Mammary epithelial cell (primary cell): ENCODE measurements at regions of chr6 and their contacts with region 1.

Region 1: GRCh38 chr6:32838114-32838958 is at the start of gene TAP2:
- DNase-seq: peak; percentile 88
- H3K4me3 ChIP-seq: peak within 1 kb of the TSS; percentile 75 to 88 (median 86)
- H3K27ac ChIP-seq: peak within 1 kb of the TSS; percentile 60
- H3K4me1 ChIP-seq: peaks cover 9% of the 10 kb centered on the region
- H3K27me3 ChIP-seq: no peaks in the 10 kb centered on the region
- CTCF ChIP-seq: peak; percentile 80 to 97
- total RNA-seq, gene TAP2: 41.8 to 63.4 TPM

Region 2: DNA sequence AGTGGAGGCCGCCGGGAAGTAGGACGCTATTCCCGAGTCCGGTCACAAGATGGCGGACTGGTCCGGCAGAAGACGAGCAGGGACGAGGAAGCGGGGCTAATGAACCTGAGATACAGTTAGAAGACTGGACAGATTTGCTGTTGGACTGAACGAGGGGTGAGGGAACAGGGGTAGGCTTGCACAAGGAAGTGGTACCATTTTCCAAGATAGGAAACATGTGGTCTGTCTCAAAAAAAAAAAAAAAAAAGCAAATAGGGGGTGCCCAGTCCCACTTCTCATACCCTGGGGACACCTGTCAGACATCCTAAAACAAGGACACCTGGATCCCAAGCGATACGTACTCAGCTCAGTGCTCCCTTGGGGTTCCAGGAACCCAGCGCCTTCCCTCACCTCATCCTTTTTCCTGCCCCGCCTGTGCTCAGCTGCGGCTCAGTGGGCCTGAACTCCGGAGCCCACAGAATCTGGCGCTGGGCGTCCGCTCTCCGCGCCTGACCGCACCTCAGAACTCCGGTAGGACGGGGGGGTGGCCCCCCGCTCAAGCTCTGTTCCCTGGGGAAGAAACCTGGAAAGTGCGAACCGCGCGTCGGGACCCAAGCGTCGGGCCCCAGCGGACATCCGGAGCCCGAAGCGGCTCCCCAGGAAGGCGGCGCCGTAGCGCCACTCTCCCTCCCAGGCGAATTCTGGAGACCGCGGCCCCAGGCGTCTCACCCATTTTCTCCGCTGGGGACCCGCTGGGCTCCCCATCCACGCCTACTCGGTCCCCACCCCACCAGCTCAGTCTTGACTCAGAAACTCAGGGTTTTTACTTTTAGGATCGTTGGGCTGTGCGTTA is 1157.3 kb before region 1 on chr6 and contains the start of gene LY6G5C:
- CTCF ChIA-PET with region 1: no interaction called
- dilution Hi-C with region 1: no loop called
- in situ Hi-C with region 1: no loop called
- intact Hi-C with region 1: no loop called
- DNase-seq: peak; percentile 69
- H3K4me3 ChIP-seq: peak within 1 kb of the TSS; percentile 42 to 53 (median 51)
- H3K27ac ChIP-seq: peak within 1 kb of the TSS; percentile 11
- H3K4me1 ChIP-seq: peaks cover 11% of the 10 kb centered on the region
- H3K27me3 ChIP-seq: no peaks in the 10 kb centered on the region
- CTCF ChIP-seq: peak; percentile 63 to 71
- total RNA-seq, gene LY6G5C: 1.4 TPM in 1 of 2 donors, not detected in the other

Region 3: DNA sequence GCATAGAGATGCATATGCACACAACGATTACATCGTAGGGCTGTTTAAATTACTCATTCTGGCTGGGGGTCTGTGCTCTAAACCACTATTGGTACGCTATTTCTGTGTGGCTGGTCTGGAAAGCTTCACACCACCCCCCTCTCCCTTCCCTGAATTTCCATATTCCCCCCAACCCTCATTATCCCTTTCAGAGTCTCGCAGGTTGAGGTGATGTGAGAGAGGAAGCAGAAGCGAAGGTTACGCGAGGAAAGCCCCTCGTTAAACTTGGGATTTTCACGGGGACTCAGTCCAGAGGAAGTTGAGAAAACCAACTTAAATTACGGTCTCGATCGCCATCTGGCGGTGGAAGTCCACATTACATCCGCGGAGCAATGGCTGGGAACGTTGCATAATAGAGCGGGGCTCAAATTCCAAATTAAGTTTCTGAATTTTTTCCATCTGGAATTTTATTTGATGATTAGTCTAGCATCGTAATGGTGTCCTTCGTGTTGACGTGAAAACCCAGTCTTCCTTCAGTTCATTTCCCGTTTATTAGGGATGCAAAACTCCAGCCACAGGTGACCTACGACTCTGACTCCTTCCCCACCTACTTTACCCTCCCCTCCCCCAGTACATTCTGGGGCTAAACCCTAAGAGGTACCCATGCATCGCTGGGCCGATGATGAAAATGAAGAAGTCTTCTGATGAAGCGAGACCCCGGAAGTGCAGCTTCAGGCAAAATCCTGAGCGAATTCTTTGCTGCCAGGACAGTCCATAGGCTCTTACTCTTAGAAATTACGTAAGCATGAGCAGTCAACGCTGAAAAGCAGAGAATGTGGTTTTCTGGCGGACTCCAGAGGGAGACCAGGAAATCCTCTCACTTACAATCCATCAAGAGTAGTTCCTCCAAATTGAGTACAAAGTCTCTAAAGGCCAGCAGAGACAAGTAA is 41.2 kb before region 1 on chr6:
- CTCF ChIA-PET with region 1: no interaction called
- dilution Hi-C with region 1: no loop called
- in situ Hi-C with region 1: no loop called
- intact Hi-C with region 1: loop called (anchors 1 kb)
- DNase-seq: peak; percentile 54
- H3K4me3 ChIP-seq: peak overlapping the region in 2 of 3 experiments; percentile 19 to 30
- H3K27ac ChIP-seq: no peak overlapping the region
- H3K4me1 ChIP-seq: peaks cover 13% of the 10 kb centered on the region
- H3K27me3 ChIP-seq: no peaks in the 10 kb centered on the region
- CTCF ChIP-seq: peak; percentile 67 to 82

Region 4: DNA sequence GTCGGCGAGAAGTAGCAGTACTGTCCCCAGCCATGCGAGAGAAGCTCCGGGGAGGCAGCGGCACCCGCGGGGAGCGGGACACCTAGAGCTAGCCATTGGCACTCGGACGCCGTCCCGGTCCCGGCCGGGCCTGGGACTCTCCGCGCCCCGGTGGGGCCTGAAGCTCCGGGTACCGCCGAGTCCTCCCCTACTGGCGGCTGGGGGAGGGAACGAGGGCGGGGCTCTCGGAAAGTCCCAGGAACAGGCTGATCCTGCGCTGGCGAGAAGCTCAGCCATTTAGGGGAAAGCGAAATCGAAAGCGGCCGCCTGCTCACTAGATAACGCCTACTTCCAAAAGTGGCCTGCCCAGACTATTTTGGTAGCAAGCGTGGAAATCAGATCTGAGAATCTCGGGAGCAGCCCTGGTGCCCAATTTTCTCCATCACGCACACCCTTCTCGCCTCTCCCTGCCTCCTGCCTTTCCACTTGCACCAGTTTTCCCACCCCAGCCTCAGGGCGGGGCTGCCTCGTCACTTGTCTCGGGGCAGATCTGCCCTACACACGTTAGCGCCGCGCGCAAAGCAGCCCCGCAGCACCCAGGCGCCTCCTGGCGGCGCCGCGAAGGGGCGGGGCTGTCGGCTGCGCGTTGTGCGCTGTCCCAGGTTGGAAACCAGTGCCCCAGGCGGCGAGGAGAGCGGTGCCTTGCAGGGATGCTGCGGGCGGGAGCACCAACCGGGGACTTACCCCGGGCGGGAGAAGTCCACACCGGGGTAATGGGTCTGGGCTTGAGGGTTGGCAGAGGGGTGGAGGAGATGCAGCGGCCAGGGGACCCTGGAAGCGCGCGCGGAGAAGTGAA is 15.4 kb after region 1 on chr6 and contains the starts of genes PSMB9 and TAP1:
- CTCF ChIA-PET with region 1: interaction called, 23 read pairs
- dilution Hi-C with region 1: no loop called
- in situ Hi-C with region 1: no loop called
- intact Hi-C with region 1: loop called (anchors 1 kb)
- DNase-seq: peak; percentile 93
- H3K4me3 ChIP-seq: peak within 1 kb of the TSS; percentile 62 to 94 (median 86)
- H3K27ac ChIP-seq: peak within 1 kb of the TSS; percentile 74
- H3K4me1 ChIP-seq: peaks cover 13% of the 10 kb centered on the region
- H3K27me3 ChIP-seq: no peaks in the 10 kb centered on the region
- CTCF ChIP-seq: peak; percentile 49 to 82
- total RNA-seq, gene PSMB9: 2.7 to 10.1 TPM
- total RNA-seq, gene TAP1: 49.2 to 50.1 TPM

Region 5: DNA sequence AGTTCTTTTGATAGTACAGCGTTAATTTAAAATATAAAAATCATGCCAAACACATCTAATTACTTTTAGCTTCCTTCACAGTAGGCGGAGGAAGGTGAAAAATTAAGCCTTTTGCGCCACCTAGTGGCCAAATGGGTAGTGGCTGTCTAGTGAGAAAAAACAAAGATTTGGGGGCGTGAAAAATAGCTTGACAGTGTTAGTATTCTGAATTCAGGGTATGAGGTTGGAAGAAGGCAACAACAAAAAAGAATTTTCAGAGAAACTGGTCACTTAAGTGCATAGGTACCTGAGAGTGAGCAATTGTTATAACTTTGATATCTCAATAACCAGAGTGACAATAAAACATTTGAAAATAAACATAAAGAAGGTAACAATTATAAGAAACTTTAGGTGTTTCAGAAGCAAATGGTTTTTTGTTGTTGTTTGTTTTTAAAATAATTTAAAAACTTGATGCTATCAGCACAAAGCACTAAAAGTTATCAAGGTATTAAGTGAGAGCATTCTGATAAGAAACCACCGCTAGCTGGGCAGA is 30.0 kb after region 1 on chr6:
- CTCF ChIA-PET with region 1: interaction called, 33 read pairs
- dilution Hi-C with region 1: no loop called
- in situ Hi-C with region 1: no loop called
- intact Hi-C with region 1: loop called (anchors 1 kb)
- DNase-seq: peak; percentile 54
- H3K4me3 ChIP-seq: no peak overlapping the region
- H3K27ac ChIP-seq: no peak overlapping the region
- H3K4me1 ChIP-seq: no peaks in the 10 kb centered on the region
- H3K27me3 ChIP-seq: peaks cover 2% of the 10 kb centered on the region
- CTCF ChIP-seq: peak; percentile 71 to 83

Region 6: GRCh38 chr6:32971581-32972352 is 133.4 kb after region 1 on chr6:
- CTCF ChIA-PET with region 1: no interaction called
- dilution Hi-C with region 1: no loop called
- in situ Hi-C with region 1: no loop called
- intact Hi-C with region 1: loop called (anchors 2 kb)
- DNase-seq: peak; percentile 100
- H3K4me3 ChIP-seq: peak overlapping the region; percentile 83 to 90 (median 89)
- H3K27ac ChIP-seq: peak overlapping the region; percentile 99
- H3K4me1 ChIP-seq: peaks cover 24% of the 10 kb centered on the region
- H3K27me3 ChIP-seq: no peaks in the 10 kb centered on the region
- CTCF ChIP-seq: no peak